GM23248 (cell line): ENCODE measurements at regions of chr12 and their contacts with region 1.

Region 1: DNA sequence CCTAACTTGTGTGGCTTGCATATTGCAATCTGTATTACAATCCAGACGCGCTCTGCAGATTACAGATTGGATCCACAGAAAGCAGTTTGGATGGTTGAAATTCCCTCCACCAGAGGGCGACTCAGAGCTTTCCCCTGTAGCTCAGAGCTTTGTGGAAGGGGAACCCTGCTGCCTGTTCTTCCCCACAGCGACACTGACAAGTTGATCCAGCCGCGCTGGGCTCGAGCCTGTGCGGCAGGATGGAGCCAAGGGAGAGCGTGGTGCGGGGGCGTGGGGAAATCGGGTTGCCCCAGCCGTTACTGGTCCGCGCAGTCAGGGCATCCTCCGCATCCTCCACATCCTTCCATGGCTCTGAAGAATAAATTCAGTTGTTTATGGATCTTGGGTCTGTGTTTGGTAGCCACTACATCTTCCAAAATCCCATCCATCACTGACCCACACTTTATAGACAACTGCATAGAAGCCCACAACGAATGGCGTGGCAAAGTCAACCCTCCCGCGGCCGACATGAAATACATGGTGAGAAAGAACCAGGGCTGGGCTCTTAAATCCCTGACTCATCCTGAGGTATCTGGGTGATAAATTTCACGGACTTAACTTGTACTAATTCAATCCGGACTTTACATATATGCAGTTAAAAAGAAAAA is at the start of gene GLIPR1L1:
- DNase-seq: peak; percentile 86
- H3K4me3 ChIP-seq: peak within 1 kb of the TSS; percentile 82
- H3K27ac ChIP-seq: peak within 1 kb of the TSS; percentile 46
- H3K4me1 ChIP-seq: peaks cover 4% of the 10 kb centered on the region; the same call in 1 of the 2 replicates
- H3K27me3 ChIP-seq: no peaks in the 10 kb centered on the region
- total RNA-seq, gene GLIPR1L1: not detected in 2 replicates

Region 2: GRCh38 chr12:75478116-75478794 is 143.7 kb after region 1 on chr12:
- in situ Hi-C with region 1: no loop called
- DNase-seq: peak; percentile 74
- H3K4me3 ChIP-seq: no peak overlapping the region
- H3K27ac ChIP-seq: peak overlapping the region; percentile 31; the same call in 1 of the 2 replicates
- H3K4me1 ChIP-seq: peaks cover 35% of the 10 kb centered on the region
- H3K27me3 ChIP-seq: no peaks in the 10 kb centered on the region

Region 3: DNA sequence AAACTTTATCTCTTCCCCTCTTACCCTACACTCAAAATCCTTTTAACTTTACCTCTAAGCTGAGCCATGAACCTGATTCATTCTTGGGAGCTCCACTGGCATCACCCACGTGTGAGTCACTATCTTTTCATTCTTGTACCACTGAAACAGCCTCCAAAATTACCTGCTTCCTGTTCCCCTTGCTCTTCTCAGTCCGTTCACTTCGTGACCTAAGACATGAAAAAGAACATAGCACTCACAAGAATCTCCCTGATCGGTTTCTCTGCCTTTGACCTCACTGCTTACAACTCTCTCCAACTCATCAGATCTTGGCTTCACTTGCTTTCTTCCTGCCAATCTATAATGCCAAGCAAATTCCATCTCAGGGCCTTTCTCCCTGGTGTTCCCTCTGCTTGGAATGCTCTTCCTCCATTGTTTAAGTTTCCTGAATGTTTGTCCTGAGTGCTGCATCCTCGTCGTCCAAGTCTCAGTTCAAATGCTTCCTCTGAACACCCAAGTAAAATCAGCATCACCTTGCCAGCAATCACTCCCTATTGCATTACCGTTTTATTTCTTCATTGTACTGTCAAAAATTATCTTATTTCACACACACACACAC is 155.2 kb after region 1 on chr12:
- in situ Hi-C with region 1: loop called (anchors 5 kb)
- DNase-seq: peak; percentile 83
- H3K4me3 ChIP-seq: peak overlapping the region; percentile 45
- H3K27ac ChIP-seq: peak overlapping the region; percentile 60
- H3K4me1 ChIP-seq: peaks cover 45% of the 10 kb centered on the region
- H3K27me3 ChIP-seq: no peaks in the 10 kb centered on the region